OCI-LY7 (cell line): ENCODE measurements at regions of chr15 and their contacts with region 1.

Region 1: DNA sequence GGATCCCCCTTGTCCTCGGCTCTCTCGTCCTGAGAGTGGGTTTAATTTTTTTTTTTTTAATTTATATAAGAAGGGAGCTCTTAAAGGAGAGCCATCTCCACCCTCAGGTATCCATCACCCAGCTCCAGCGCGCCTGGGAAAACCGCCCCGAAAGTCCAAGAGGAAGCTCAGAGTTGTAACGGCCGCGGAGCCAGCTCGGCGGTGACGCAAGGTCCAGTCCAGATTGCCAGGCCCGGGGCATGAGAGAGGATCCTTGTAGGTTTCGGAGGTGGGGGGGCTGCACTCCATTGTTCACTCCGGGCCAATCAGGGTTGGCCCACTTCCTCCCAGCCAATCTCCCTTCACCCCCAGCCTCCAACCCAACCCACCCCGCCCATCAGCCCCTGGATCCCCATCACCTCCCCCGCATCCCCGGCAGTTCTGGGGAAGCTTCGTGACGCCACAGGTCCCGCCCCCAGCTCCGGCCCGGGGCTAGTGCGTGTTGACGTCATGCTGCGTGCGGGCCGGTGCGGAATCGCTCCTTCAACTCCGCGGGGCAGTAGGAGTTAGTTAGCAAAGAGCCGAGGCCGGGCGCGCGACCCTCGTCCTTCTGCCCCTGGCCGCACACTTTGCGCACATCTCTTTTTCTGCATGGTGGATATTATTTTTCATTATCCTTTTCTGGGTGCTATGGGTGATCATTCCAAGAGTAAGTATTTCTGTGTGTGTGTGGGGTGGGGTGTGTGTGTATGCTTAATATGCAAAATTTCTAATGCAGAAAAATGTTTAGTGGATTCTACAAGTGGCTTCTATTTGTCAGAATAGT is at the start of gene ISL2:
- DNase-seq: peak; percentile 96
- H3K4me3 ChIP-seq: peak within 1 kb of the TSS; percentile 77
- H3K27ac ChIP-seq: peak within 1 kb of the TSS; percentile 65
- H3K4me1 ChIP-seq: peaks cover 39% of the 10 kb centered on the region
- CTCF ChIP-seq: no peak
- total RNA-seq, gene ISL2: 2.8 and 6.2 TPM in 2 replicates

Region 2: GRCh38 chr15:76190834-76191538 is 145.5 kb before region 1 on chr15:
- CTCF ChIA-PET with region 1: no interaction called
- POLR2A ChIA-PET with region 1: no interaction called
- intact Hi-C with region 1: loop called (anchors 2 kb)
- DNase-seq: peak; percentile 78
- H3K4me3 ChIP-seq: no peak overlapping the region
- H3K27ac ChIP-seq: no peak overlapping the region
- H3K4me1 ChIP-seq: peaks cover 3% of the 10 kb centered on the region
- CTCF ChIP-seq: peak; percentile 91

Region 3: GRCh38 chr15:76217029-76217428 is 119.4 kb before region 1 on chr15:
- CTCF ChIA-PET with region 1: no interaction called
- POLR2A ChIA-PET with region 1: interaction called, 11 read pairs
- intact Hi-C with region 1: no loop called
- DNase-seq: no peak
- H3K4me3 ChIP-seq: no peak overlapping the region
- H3K27ac ChIP-seq: no peak overlapping the region
- H3K4me1 ChIP-seq: no peaks in the 10 kb centered on the region
- CTCF ChIP-seq: no peak

Region 4: GRCh38 chr15:76245072-76245610 is 91.3 kb before region 1 on chr15:
- CTCF ChIA-PET with region 1: no interaction called
- POLR2A ChIA-PET with region 1: no interaction called
- intact Hi-C with region 1: no loop called
- DNase-seq: no peak
- H3K4me3 ChIP-seq: no peak overlapping the region
- H3K27ac ChIP-seq: no peak overlapping the region
- H3K4me1 ChIP-seq: no peaks in the 10 kb centered on the region
- CTCF ChIP-seq: no peak

Region 5: DNA sequence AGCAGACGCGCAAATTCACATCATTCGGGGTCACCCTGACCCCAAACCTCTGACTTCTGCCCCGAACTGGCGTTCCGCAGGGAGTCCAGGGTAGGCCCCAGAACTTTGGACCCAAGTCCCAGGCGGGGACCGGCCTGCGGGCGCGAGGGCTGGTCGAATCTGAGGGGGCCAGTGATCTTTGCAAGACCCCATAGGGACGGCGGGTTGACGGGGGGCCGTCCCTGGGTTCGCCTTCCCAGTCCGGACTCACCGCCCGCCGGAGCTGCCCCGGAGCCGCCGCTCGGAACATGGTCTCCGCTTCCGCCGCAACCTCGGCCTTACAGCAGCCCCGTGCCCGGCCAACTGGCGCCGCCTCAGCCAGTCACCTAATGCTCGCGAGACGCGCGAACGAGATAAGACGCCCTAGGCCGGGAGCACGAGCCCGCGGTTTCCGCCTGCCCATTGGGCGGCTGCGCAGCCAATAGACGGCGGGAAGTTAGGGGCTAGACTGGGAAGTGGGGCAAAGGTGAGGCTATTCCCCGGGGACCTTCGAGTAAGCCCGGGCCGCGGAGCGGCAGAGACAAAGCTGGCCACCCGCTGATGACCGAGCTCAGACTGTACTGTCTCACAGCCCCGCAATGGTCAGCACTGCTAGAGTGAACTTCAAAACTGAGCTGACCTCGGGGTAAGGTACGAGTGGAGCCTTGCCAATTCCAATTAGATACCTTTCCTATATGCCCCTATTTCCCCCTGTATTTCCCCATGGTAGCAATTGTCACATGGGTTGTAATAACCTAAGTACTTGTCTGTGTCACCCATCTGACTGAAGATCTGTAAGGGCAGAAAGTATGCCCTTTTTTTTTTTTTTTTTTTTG is 25.1 kb before region 1 on chr15 and contains the start of gene ETFA:
- CTCF ChIA-PET with region 1: no interaction called
- POLR2A ChIA-PET with region 1: interaction called, 6 read pairs
- intact Hi-C with region 1: loop called (anchors 1 kb)
- DNase-seq: peak; percentile 99
- H3K4me3 ChIP-seq: peak within 1 kb of the TSS; percentile 80
- H3K27ac ChIP-seq: peak within 1 kb of the TSS; percentile 27
- H3K4me1 ChIP-seq: peaks cover 13% of the 10 kb centered on the region
- CTCF ChIP-seq: no peak
- total RNA-seq, gene ETFA: 84.8 and 99.4 TPM in 2 replicates